ENCODE measurements at regions of chr14 and their contacts with region 1.

Region 1: GRCh38 chr14:35883677-35884293 is 57.6 kb downstream of the BRMS1L start:
- DNase-seq: peak; percentile 66
- ATAC-seq: no peak
- H3K4me3 Mint-ChIP-seq: no peak overlapping the region
- H3K27ac Mint-ChIP-seq: no peak overlapping the region
- H3K4me1 Mint-ChIP-seq: no peaks in the 10 kb centered on the region
- H3K27me3 Mint-ChIP-seq: peaks cover 2% of the 10 kb centered on the region
- CTCF ChIP-seq: peak; percentile 74

Region 2: DNA sequence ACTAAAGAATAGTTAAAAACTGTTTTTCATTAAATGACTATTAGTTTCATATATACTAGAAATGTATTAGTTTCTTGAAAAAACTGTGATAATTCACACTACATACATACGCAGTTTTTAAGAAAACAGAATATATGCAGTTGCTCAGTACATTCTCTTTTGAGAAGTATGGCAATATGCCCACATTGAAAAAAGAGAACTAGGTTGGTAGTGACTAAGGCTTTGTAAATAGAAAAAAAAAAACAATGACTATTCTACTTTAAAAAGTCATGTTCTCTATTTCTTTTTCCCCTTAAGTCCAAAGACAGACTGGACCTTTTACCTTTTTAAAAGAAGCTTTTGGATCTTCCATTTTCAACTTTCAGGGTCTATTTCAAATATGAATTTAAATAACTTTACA is 1278.8 kb before region 1 on chr14:
- CTCF ChIA-PET with region 1: no interaction called
- POLR2A ChIA-PET with region 1: no interaction called
- intact Hi-C with region 1: no loop called
- DNase-seq: no peak
- ATAC-seq: no peak
- H3K4me3 Mint-ChIP-seq: no peak overlapping the region
- H3K27ac Mint-ChIP-seq: no peak overlapping the region
- H3K4me1 Mint-ChIP-seq: peaks cover 5% of the 10 kb centered on the region
- H3K27me3 Mint-ChIP-seq: no peaks in the 10 kb centered on the region
- CTCF ChIP-seq: no peak

Region 3: DNA sequence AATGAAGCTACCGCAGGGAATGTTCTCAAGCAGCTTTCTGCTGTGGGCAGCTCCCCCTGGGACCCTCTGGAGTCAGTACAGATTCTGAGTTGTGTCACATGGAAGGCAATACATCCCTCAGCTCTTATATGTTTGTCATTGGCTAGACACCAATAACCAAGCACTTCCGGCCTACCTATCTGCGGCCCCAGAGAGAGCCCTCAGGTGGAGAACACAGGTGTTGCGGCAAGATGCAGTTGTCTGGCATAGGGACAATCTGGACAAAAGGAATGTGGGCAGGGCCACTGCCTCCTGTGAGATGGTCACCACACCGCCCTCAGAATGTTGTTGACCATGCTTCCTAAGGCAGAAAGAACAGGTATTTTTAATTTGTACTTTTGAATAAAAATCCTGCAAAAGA is 61.1 kb after region 1 on chr14:
- CTCF ChIA-PET with region 1: interaction called, 31 read pairs
- POLR2A ChIA-PET with region 1: no interaction called
- intact Hi-C with region 1: no loop called
- DNase-seq: peak; percentile 56
- ATAC-seq: peak; percentile 79
- H3K4me3 Mint-ChIP-seq: no peak overlapping the region
- H3K27ac Mint-ChIP-seq: no peak overlapping the region
- H3K4me1 Mint-ChIP-seq: peaks cover 2% of the 10 kb centered on the region
- H3K27me3 Mint-ChIP-seq: no peaks in the 10 kb centered on the region
- CTCF ChIP-seq: peak; percentile 52

Region 4: GRCh38 chr14:35959835-35960234 is 76.0 kb after region 1 on chr14:
- CTCF ChIA-PET with region 1: interaction called, 15 read pairs
- POLR2A ChIA-PET with region 1: no interaction called
- intact Hi-C with region 1: no loop called
- DNase-seq: no peak
- ATAC-seq: no peak
- H3K4me3 Mint-ChIP-seq: no peak overlapping the region
- H3K27ac Mint-ChIP-seq: no peak overlapping the region
- H3K4me1 Mint-ChIP-seq: no peaks in the 10 kb centered on the region
- H3K27me3 Mint-ChIP-seq: no peaks in the 10 kb centered on the region
- CTCF ChIP-seq: no peak

Region 5: GRCh38 chr14:36021030-36021422 is 137.2 kb after region 1 on chr14:
- CTCF ChIA-PET with region 1: interaction called, 3 read pairs
- POLR2A ChIA-PET with region 1: no interaction called
- intact Hi-C with region 1: loop called (anchors 5 kb)
- DNase-seq: no peak
- ATAC-seq: no peak
- H3K4me3 Mint-ChIP-seq: no peak overlapping the region
- H3K27ac Mint-ChIP-seq: no peak overlapping the region
- H3K4me1 Mint-ChIP-seq: peaks cover 12% of the 10 kb centered on the region
- H3K27me3 Mint-ChIP-seq: peaks cover 5% of the 10 kb centered on the region
- CTCF ChIP-seq: no peak

Region 6: DNA sequence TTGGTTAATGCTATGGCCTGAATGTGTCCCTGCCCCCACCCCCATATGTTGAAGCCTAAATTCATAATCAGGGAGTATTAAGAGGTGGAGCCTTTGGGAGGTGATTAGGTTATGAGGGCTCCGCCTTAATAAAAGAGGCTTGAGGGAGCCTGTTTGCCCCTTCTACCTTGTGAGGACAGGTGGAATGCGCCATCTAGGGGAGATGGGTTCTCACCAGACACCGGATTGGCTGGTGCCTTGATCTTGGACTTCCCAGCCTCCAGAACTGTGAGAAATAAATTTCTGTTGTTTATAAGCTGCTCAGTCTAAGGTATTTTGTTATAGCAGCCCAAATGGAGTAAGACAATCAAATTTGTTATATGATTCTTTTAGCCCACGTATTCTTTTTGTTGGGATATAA is 144.4 kb after region 1 on chr14:
- CTCF ChIA-PET with region 1: interaction called, 10 read pairs
- POLR2A ChIA-PET with region 1: no interaction called
- intact Hi-C with region 1: loop called (anchors 5 kb)
- DNase-seq: peak; percentile 43
- ATAC-seq: no peak
- H3K4me3 Mint-ChIP-seq: no peak overlapping the region
- H3K27ac Mint-ChIP-seq: no peak overlapping the region
- H3K4me1 Mint-ChIP-seq: no peaks in the 10 kb centered on the region
- H3K27me3 Mint-ChIP-seq: peaks cover 13% of the 10 kb centered on the region
- CTCF ChIP-seq: no peak

Region 7: DNA sequence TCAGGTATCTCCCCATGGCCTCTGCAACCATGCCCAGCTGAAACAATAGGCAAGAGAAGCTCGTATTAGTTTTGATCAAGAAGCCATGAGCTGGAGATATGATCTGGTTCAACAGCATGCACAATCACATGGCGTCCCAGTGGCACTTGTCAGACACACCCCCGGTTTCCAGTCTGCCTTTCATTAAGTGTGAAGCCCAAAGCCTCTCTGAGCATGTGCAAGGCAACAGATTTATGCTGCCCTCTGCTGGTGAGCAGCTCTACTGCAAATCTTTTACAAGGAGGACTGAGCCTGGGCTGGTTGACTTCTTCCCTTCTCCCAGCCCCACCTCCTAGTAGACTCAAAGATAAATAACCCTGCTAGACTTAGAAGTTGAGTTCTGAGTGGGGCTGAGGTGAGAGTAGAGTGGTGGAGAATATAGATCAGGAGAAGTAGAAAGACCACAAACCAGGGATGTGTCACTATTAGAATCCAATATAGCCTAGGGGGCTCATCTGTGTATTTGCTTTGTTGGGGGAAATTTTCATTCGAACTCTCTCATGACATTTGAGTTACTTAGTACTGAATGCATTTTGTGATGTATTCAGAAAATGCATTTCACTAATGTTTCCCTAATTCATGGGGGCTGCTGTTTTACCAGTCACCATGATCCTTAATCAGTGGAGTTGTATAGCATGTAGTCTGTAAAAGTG is 490.3 kb after region 1 on chr14:
- CTCF ChIA-PET with region 1: interaction called, 4 read pairs
- POLR2A ChIA-PET with region 1: no interaction called
- intact Hi-C with region 1: loop called (anchors 10 kb)
- DNase-seq: peak; percentile 85
- ATAC-seq: peak; percentile 82
- H3K4me3 Mint-ChIP-seq: no peak overlapping the region
- H3K27ac Mint-ChIP-seq: no peak overlapping the region
- H3K4me1 Mint-ChIP-seq: no peaks in the 10 kb centered on the region
- H3K27me3 Mint-ChIP-seq: no peaks in the 10 kb centered on the region
- CTCF ChIP-seq: peak; percentile 74